Gastrocnemius medialis (tissue), 4 donors: ENCODE measurements at regions of chr20 and their contacts with region 1.

Region 1: GRCh38 chr20:44960103-44960852 is at the start of gene TOMM34:
- DNase-seq: peak; percentile 90 to 91
- ATAC-seq: peak; percentile 96 to 97
- H3K4me3 ChIP-seq: peak within 1 kb of the TSS; percentile 70 to 96 (median 82)
- H3K27ac ChIP-seq: peak within 1 kb of the TSS; percentile 80 to 91 (median 86)
- H3K4me1 ChIP-seq: peaks cover 17 to 20% of the 10 kb centered on the region in 2 donors
- H3K27me3 ChIP-seq: no peaks in the 10 kb centered on the region
- CTCF ChIP-seq: peak in 1 of 5 experiments; percentile 8
- POLR2A ChIP-seq: peak; percentile 82 to 92
- total RNA-seq, gene TOMM34: 9.8 to 19.2 (median 17.0) TPM

Region 2: GRCh38 chr20:44885392-44886265 is 74.6 kb before region 1 on chr20 and contains the start of gene YWHAB:
- in situ Hi-C with region 1: no loop called
- intact Hi-C with region 1: loop called (anchors 2 kb)
- DNase-seq: peak; percentile 97
- ATAC-seq: peak; percentile 97 to 98
- H3K4me3 ChIP-seq: peak within 1 kb of the TSS; percentile 74 to 96 (median 80)
- H3K27ac ChIP-seq: peak within 1 kb of the TSS; percentile 84 to 97 (median 92)
- H3K4me1 ChIP-seq: peaks cover 29 to 39% of the 10 kb centered on the region in 2 donors
- H3K27me3 ChIP-seq: no peaks in the 10 kb centered on the region
- CTCF ChIP-seq: peak in 3 of 5 experiments; percentile 8 to 19 (median 9)
- POLR2A ChIP-seq: peak; percentile 70 to 80
- total RNA-seq, gene YWHAB: 73.2 to 77.9 (median 75.2) TPM

Region 3: DNA sequence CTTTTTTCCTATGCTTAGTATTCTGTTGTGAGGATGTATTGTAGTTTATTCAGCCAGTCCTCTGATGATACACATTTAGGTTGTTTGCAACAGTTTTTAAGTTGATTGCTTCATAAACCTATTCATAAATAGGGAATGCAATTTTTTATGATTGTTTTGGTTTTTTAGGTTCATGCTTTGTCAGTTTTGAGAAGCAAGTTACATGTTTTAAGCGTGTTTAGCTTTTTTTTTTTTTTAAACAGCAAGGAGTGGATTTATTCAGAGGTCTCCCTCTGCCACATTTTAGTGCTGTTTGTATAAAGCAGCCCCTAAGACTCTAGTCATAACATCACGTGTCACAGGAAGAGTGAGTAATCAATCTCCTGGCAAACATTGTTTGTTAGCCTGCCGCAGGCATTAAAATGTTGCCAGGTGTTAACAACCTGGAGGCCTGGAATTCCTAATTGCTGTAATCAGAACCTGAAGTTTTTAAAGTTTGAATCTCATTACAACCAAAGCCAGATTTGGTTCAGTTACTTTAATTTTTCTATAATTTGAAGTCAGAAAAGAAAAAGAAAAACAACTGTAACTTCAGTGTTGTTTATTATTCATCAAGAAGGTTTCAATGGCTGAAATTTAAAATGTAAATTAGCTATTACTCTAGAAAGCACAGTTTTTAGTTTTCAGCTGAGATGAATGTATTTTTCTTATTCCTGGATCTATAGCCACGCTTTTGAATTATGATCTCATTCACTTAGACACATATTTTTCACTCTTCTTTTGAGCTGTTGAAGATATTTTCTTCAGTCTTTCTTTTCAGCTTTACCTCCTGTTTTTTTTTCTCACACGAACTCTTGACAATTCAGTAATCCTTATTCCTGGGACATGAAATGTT is 81.4 kb after region 1 on chr20:
- in situ Hi-C with region 1: no loop called
- intact Hi-C with region 1: no loop called
- DNase-seq: no peak
- ATAC-seq: no peak
- H3K4me3 ChIP-seq: no peak overlapping the region
- H3K27ac ChIP-seq: no peak overlapping the region
- H3K4me1 ChIP-seq: peaks cover 17 to 19% of the 10 kb centered on the region in 2 donors
- H3K27me3 ChIP-seq: no peaks in the 10 kb centered on the region
- CTCF ChIP-seq: no peak
- POLR2A ChIP-seq: no peak

Region 4: DNA sequence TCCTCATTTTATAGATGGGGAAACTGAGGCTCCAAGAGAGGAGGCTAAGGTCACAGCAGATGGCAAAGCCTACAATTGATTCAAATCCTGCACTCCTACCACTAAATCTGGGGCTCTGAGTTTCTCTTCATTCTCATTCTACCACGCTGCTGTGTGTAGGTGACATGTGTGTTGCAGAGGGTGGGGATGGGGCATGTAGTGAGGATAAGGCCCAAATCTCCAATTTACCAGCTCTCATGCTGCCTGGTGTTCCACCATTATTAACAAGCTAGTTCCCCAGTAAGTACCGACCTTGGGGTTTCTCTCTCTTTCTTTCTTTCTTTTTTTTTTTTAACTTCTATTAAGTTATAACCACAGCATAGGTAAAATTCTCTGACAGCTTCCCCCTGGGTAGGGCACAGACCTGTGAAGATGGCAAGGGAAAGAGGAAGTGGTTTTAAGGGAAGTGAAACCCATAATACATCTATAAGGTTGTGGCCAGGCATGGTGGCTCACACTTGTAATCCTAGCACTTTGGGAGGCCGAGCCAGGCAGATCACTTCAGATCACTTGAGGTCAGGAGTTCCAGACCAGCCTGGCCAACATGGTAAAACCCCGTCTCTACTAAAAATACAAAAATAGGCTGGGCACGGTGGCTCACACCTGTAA is 360.8 kb after region 1 on chr20:
- in situ Hi-C with region 1: no loop called
- intact Hi-C with region 1: no loop called
- DNase-seq: no peak
- ATAC-seq: no peak
- H3K4me3 ChIP-seq: no peak overlapping the region
- H3K27ac ChIP-seq: no peak overlapping the region
- H3K4me1 ChIP-seq: no peaks in the 10 kb centered on the region
- H3K27me3 ChIP-seq: peaks cover 6 to 12% (median 7%) of the 10 kb centered on the region in 3 donors
- CTCF ChIP-seq: no peak
- POLR2A ChIP-seq: no peak